CD4-positive, alpha-beta memory T cell (primary cell): ENCODE measurements at regions of chr1 and their contacts with region 1.

Region 1: GRCh38 chr1:44036409-44037139 is 5.3 kb upstream of the SLC6A9 start:
- DNase-seq: peak; percentile 59 to 67 (median 61)
- H3K4me3 ChIP-seq: no peak overlapping the region
- H3K4me3 Mint-ChIP-seq: peak overlapping the region in 1 of 8 donors; percentile 0
- H3K27ac ChIP-seq: no peak overlapping the region
- H3K27ac Mint-ChIP-seq: peak overlapping the region in 1 of 7 donors; percentile 27
- H3K4me1 ChIP-seq: peaks cover 9% of the 10 kb centered on the region
- H3K4me1 Mint-ChIP-seq: peaks cover 5 to 19% (median 9%) of the 10 kb centered on the region in 4 donors
- H3K27me3 ChIP-seq: no peaks in the 10 kb centered on the region
- H3K27me3 Mint-ChIP-seq: no peaks in the 10 kb centered on the region

Region 2: GRCh38 chr1:43529206-43529731 is 507.3 kb before region 1 on chr1:
- CTCF ChIA-PET with region 1: interaction called, 9 read pairs
- POLR2A ChIA-PET with region 1: no interaction called
- intact Hi-C with region 1: loop called (anchors 1 kb)
- DNase-seq: peak; percentile 70 to 76 (median 73)
- H3K4me3 ChIP-seq: no peak overlapping the region
- H3K4me3 Mint-ChIP-seq: peak overlapping the region in 7 of 8 donors; percentile 19 to 84 (median 51)
- H3K27ac ChIP-seq: no peak overlapping the region
- H3K27ac Mint-ChIP-seq: peak overlapping the region in 1 of 7 donors; percentile 74
- H3K4me1 ChIP-seq: peaks cover 21% of the 10 kb centered on the region
- H3K4me1 Mint-ChIP-seq: peaks cover 15 to 31% (median 19%) of the 10 kb centered on the region in 4 donors
- H3K27me3 ChIP-seq: peaks cover 13% of the 10 kb centered on the region
- H3K27me3 Mint-ChIP-seq: peaks cover 39 to 63% of the 10 kb centered on the region in 2 donors

Region 3: GRCh38 chr1:43934101-43934985 is 102.2 kb before region 1 on chr1:
- CTCF ChIA-PET with region 1: interaction called, 3 read pairs
- POLR2A ChIA-PET with region 1: no interaction called
- intact Hi-C with region 1: loop called (anchors 5 kb)
- DNase-seq: peak in 4 of 5 donors; percentile 23 to 35 (median 32)
- H3K4me3 ChIP-seq: no peak overlapping the region
- H3K4me3 Mint-ChIP-seq: peak overlapping the region in 4 of 8 donors; percentile 0 to 56 (median 34)
- H3K27ac ChIP-seq: no peak overlapping the region
- H3K27ac Mint-ChIP-seq: peak overlapping the region in 2 of 7 donors; percentile 43 to 56
- H3K4me1 ChIP-seq: peaks cover 8% of the 10 kb centered on the region
- H3K4me1 Mint-ChIP-seq: peaks cover 3 to 25% (median 4%) of the 10 kb centered on the region in 4 donors
- H3K27me3 ChIP-seq: peaks cover 23% of the 10 kb centered on the region
- H3K27me3 Mint-ChIP-seq: peaks cover 16 to 21% of the 10 kb centered on the region in 2 donors

Region 4: GRCh38 chr1:44012941-44013609 is 23.5 kb before region 1 on chr1:
- CTCF ChIA-PET with region 1: interaction called, 225 read pairs
- POLR2A ChIA-PET with region 1: no interaction called
- intact Hi-C with region 1: no loop called
- DNase-seq: no peak
- H3K4me3 ChIP-seq: no peak overlapping the region
- H3K4me3 Mint-ChIP-seq: no peak overlapping the region
- H3K27ac ChIP-seq: no peak overlapping the region
- H3K27ac Mint-ChIP-seq: no peak overlapping the region
- H3K4me1 ChIP-seq: no peaks in the 10 kb centered on the region
- H3K4me1 Mint-ChIP-seq: peaks cover 0 to 4% (median 1%) of the 10 kb centered on the region in 4 donors
- H3K27me3 ChIP-seq: no peaks in the 10 kb centered on the region
- H3K27me3 Mint-ChIP-seq: no peaks in the 10 kb centered on the region

Region 5: DNA sequence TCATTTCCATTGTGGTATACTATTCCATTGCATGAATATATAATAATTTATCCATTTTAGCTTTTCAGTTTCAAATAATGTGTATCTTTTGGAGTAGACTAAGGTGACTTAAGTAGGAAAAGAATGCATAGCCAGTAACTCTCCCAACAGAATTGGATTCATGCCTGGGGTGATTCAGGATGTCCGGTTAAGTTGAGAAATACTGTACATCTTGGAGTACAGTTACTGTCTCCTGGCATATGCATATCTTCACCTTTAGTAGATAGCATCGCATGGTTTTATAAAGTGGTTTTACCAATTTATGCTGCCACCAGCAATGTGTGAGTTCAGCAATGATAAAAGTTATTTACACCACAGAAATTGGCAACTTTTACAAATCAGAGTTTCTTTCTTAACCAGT is 13.3 kb after region 1 on chr1:
- CTCF ChIA-PET with region 1: interaction called, 48 read pairs
- POLR2A ChIA-PET with region 1: no interaction called
- intact Hi-C with region 1: no loop called
- DNase-seq: no peak
- H3K4me3 ChIP-seq: no peak overlapping the region
- H3K4me3 Mint-ChIP-seq: no peak overlapping the region
- H3K27ac ChIP-seq: no peak overlapping the region
- H3K27ac Mint-ChIP-seq: no peak overlapping the region
- H3K4me1 ChIP-seq: no peaks in the 10 kb centered on the region
- H3K4me1 Mint-ChIP-seq: peaks cover 0 to 5% (median 3%) of the 10 kb centered on the region in 4 donors
- H3K27me3 ChIP-seq: no peaks in the 10 kb centered on the region
- H3K27me3 Mint-ChIP-seq: peaks cover 12 to 13% of the 10 kb centered on the region in 2 donors

Region 6: GRCh38 chr1:44076066-44076465 is 39.5 kb after region 1 on chr1:
- CTCF ChIA-PET with region 1: no interaction called
- POLR2A ChIA-PET with region 1: no interaction called
- intact Hi-C with region 1: no loop called
- DNase-seq: no peak
- H3K4me3 ChIP-seq: no peak overlapping the region
- H3K4me3 Mint-ChIP-seq: no peak overlapping the region
- H3K27ac ChIP-seq: no peak overlapping the region
- H3K27ac Mint-ChIP-seq: no peak overlapping the region
- H3K4me1 ChIP-seq: no peaks in the 10 kb centered on the region
- H3K4me1 Mint-ChIP-seq: no peaks in the 10 kb centered on the region
- H3K27me3 ChIP-seq: no peaks in the 10 kb centered on the region
- H3K27me3 Mint-ChIP-seq: peaks cover 14 to 23% of the 10 kb centered on the region in 2 donors